ENCODE measurements at regions of chr14 and their contacts with region 1.

Region 1: GRCh38 chr14:32820181-32820580 is 118.5 kb upstream of the NPAS3 start:
- DNase-seq: no peak

Region 2: DNA sequence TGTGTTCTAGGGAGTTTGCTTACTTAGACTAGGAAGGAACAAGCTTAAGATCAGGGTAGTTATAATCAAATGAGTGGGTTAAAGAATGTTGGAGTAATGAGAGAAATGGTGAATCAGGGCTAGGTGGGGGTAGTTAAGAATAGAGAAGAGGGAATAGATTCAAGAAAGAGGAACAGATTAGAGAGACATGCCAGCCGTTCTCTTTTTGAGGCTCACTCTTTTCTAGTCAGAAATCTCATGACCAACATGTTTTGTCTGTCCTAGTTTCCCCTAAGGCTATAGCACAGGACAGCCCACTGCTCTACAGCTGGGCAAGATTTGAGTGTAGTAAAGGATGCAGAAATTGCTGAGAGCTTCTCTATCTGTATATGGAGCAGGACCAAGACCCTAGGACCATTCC is 232.7 kb before region 1 on chr14:
- intact Hi-C with region 1: no loop called
- DNase-seq: no peak

Region 3: DNA sequence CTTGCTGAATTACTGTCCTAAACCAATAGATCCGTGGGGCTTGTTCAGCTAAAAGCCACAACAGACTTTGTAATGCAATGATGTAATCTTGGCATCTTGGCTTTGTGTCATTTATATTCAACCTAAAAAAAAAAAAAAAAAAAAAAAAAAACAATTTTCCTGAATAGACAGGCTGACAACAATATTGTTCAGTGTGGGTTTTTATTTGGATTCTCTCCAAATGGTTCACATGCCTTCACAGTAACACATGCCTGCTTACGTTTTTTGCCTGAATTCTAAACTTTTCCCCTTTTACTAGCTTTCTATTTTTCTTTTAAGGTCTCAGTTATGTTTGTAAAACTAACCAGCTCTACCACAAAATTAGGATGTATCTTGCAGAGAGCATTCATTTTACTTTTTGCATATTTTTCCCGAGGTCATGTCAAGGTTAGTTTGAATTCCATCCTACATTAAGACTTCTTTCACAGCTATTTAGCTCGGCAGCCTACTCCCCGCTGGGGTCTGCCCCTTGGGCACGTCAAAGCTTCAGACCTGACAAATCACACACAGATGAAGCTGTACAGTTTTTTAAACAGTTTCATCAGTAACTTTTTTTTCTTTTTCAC is 95.2 kb before region 1 on chr14:
- intact Hi-C with region 1: loop called (anchors 5 kb)
- DNase-seq: peak in 25 of 42 donors; percentile 10 to 70 (median 38)

Region 4: GRCh38 chr14:32986791-32987540 is 166.8 kb after region 1 on chr14:
- intact Hi-C with region 1: no loop called
- DNase-seq: peak; percentile 65 to 93 (median 84)

Region 5: GRCh38 chr14:33030386-33030785 is 210.2 kb after region 1 on chr14:
- intact Hi-C with region 1: no loop called
- DNase-seq: no peak

Measured in head of caudate nucleus (tissue), 42 donors.